Activated naive CD4-positive, alpha-beta T cell treated with anti-CD3 and anti-CD28 coated beads, Interleukin-2, amount 10 ng/mL, durations not matched to agents 7 days and 5 days (primary cell): ENCODE measurements at regions of chr14 and their contacts with region 1.

Region 1: GRCh38 chr14:100645192-100645990 is 58.2 kb upstream of the BEGAIN start:
- DNase-seq: peak; percentile 93
- H3K4me3 Mint-ChIP-seq: peak overlapping the region; percentile 1
- H3K27ac Mint-ChIP-seq: peak overlapping the region; percentile 75
- H3K4me1 Mint-ChIP-seq: peaks cover 60% of the 10 kb centered on the region
- H3K27me3 Mint-ChIP-seq: peaks cover 50% of the 10 kb centered on the region

Region 2: DNA sequence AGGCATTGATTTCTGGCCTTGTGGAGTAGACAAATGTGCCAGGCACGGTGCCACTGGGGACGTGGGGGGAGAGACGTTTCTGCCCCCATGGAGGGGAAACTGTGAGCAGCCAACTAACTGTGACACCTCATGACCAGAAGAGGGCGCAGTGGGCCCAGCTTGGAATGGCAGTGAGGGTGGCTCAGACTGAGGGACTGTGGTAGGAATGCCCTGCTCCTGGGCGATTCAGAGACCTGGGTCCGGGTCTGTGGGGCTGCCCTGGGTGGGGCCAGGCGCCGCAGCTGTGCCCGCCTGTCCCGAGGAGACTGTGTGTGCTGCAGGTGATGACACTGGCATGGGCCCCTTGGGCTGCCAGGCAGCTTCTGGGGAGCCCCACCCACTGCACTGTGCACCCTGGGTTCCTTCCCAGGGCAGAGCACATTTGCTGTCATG is 261.6 kb before region 1 on chr14:
- CTCF ChIA-PET with region 1: interaction called, 160 read pairs
- DNase-seq: peak; percentile 76
- H3K4me3 Mint-ChIP-seq: no peak overlapping the region
- H3K27ac Mint-ChIP-seq: no peak overlapping the region
- H3K4me1 Mint-ChIP-seq: peaks cover 19% of the 10 kb centered on the region
- H3K27me3 Mint-ChIP-seq: no peaks in the 10 kb centered on the region

Region 3: GRCh38 chr14:100440187-100440631 is 205.2 kb before region 1 on chr14:
- CTCF ChIA-PET with region 1: interaction called, 56 read pairs
- DNase-seq: peak; percentile 57
- H3K4me3 Mint-ChIP-seq: no peak overlapping the region
- H3K27ac Mint-ChIP-seq: no peak overlapping the region
- H3K4me1 Mint-ChIP-seq: peaks cover 18% of the 10 kb centered on the region
- H3K27me3 Mint-ChIP-seq: no peaks in the 10 kb centered on the region

Region 4: DNA sequence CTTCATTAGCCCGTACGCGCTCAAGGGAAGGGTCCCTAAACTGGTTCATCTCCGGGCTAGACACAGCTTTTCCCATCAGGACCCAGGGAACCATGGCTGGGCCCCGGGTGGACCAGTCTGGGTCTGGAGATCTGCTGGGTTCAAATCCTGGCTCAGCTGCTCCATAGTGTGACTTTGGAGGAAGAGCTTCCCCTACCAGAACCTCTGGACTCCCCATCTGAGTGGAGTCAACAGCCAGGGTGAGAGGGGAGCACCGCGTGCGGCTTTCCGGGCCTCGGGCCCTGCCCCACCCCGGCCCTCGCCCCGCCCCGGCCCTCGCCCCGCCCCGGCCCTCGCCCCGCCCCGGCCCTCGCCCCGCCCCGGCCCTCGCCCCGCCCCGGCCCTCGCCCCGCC is 99.3 kb before region 1 on chr14:
- CTCF ChIA-PET with region 1: interaction called, 18 read pairs
- DNase-seq: no peak
- H3K4me3 Mint-ChIP-seq: peak overlapping the region; percentile 28
- H3K27ac Mint-ChIP-seq: peak overlapping the region; percentile 67
- H3K4me1 Mint-ChIP-seq: peaks cover 35% of the 10 kb centered on the region
- H3K27me3 Mint-ChIP-seq: peaks cover 33% of the 10 kb centered on the region

Region 5: GRCh38 chr14:100634026-100634425 is 11.4 kb before region 1 on chr14:
- CTCF ChIA-PET with region 1: interaction called, 13 read pairs
- DNase-seq: no peak
- H3K4me3 Mint-ChIP-seq: no peak overlapping the region
- H3K27ac Mint-ChIP-seq: no peak overlapping the region
- H3K4me1 Mint-ChIP-seq: peaks cover 11% of the 10 kb centered on the region
- H3K27me3 Mint-ChIP-seq: peaks cover 80% of the 10 kb centered on the region